ENCODE measurements at regions of chr2 and their contacts with region 1.

Region 1: DNA sequence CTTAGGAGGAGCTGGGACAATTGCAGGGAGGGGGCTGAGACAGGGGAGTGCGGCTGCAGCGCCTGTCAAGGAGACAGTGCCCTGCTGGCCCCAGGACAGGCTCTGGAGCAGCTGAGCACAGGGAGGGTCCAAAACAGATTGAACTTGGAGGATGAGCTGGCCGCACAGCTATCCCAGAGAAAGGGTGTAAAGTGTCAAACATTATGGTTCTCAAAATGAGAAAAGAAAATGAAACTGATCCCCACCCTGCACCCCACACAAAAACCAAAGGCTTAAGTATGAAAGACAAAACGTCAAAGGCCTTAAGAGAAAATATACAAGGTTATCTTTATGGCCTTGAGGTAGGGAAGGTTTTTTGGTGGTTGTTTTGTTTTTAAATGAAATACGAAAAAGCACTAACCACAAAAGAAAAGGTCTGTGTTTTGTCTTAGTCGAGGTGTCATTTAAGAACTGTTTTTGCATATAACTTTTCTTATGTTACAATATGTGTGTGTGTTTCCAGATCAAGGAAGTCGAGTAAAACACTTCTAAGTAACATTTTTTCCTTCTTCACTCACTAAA is 111.8 kb downstream of the HDAC4 start:
- DNase-seq: peak; percentile 68
- H3K4me3 Mint-ChIP-seq: peak overlapping the region; percentile 45
- H3K27ac Mint-ChIP-seq: peak overlapping the region; percentile 86
- H3K4me1 Mint-ChIP-seq: peaks cover 76% of the 10 kb centered on the region
- H3K27me3 Mint-ChIP-seq: peaks cover 13% of the 10 kb centered on the region

Region 2: DNA sequence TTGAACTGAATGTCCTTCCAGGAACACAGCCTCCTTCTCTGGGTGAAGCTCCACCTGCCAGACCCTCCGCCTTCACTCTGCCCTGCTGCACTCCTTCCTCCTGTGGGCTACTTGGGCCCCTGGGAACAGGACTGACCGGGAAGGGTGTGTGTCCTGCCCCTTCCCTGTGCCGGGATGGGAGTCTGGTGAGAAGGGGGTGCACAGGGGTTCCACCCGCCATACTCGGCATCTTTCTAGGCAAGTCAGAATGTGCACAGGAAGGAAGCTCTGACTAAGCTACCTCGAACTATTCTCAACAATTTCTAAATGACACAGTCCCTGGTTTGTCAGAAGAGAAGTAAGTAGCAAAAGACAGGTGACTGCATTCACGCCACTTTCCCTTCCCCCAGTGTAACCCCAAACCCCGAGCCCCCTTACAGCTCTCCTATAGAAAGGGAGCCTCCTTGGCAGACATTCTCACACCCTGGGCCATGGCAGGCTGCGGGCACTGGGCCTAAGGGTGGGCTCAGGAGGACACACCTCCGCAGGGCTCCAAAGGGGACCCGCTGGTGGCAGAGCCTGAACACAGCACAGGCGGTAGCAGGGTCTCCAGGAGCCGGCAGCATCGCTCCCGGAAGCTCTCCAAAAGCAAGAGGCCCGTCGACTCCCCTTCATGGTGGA is 72.3 kb before region 1 on chr2:
- CTCF ChIA-PET with region 1: no interaction called
- intact Hi-C with region 1: loop called (anchors 1 kb)
- DNase-seq: peak; percentile 72
- H3K4me3 Mint-ChIP-seq: peak overlapping the region; percentile 69
- H3K27ac Mint-ChIP-seq: peak overlapping the region; percentile 87
- H3K4me1 Mint-ChIP-seq: peaks cover 71% of the 10 kb centered on the region
- H3K27me3 Mint-ChIP-seq: no peaks in the 10 kb centered on the region

Region 3: DNA sequence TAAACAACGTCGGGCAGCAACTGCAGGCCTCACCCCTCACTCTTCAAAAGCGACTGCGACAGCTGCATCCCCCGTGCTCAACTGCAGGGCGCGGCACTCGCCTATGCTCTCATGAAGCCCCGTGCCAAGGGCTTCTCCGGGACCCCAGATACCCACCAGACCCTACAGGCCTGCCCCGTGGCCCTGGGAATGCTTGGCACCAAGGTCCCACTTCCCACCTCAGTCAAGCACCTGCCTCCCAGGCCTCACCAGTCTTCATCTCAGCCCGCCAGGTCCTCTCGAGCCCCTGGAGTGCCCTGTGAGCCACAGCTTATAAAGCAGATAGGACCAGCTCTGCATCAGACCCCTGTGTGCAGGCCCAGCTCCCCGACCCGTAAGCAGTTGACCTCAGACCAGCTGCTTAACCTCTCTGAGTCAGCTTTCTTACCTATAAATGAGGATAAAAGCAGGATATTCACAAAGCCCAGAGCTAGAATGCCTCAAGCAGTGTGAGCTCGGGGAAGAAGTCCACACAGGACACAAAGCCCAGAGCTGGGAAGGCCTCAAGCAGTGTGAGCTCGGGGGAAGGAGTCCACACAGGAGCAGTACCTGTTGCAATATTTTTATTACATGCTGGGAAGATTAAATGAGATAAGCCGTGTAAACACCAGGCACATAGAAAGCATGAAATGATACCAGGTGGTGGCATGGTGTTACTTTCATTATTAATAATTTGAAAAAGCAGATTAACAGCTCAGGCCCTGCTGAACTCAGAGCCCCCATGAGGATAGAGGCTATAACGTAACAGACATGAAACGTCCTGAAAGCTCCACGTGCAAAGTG is 14.9 kb after region 1 on chr2:
- CTCF ChIA-PET with region 1: interaction called, 3 read pairs
- intact Hi-C with region 1: loop called (anchors 1 kb)
- DNase-seq: peak; percentile 50
- H3K4me3 Mint-ChIP-seq: no peak overlapping the region
- H3K27ac Mint-ChIP-seq: no peak overlapping the region
- H3K4me1 Mint-ChIP-seq: peaks cover 40% of the 10 kb centered on the region
- H3K27me3 Mint-ChIP-seq: no peaks in the 10 kb centered on the region

Region 4: GRCh38 chr2:239326831-239327535 is 38.0 kb after region 1 on chr2:
- CTCF ChIA-PET with region 1: interaction called, 5 read pairs
- intact Hi-C with region 1: loop called (anchors 1 kb)
- DNase-seq: peak; percentile 94
- H3K4me3 Mint-ChIP-seq: peak overlapping the region; percentile 24
- H3K27ac Mint-ChIP-seq: peak overlapping the region; percentile 81
- H3K4me1 Mint-ChIP-seq: peaks cover 79% of the 10 kb centered on the region
- H3K27me3 Mint-ChIP-seq: no peaks in the 10 kb centered on the region

Region 5: DNA sequence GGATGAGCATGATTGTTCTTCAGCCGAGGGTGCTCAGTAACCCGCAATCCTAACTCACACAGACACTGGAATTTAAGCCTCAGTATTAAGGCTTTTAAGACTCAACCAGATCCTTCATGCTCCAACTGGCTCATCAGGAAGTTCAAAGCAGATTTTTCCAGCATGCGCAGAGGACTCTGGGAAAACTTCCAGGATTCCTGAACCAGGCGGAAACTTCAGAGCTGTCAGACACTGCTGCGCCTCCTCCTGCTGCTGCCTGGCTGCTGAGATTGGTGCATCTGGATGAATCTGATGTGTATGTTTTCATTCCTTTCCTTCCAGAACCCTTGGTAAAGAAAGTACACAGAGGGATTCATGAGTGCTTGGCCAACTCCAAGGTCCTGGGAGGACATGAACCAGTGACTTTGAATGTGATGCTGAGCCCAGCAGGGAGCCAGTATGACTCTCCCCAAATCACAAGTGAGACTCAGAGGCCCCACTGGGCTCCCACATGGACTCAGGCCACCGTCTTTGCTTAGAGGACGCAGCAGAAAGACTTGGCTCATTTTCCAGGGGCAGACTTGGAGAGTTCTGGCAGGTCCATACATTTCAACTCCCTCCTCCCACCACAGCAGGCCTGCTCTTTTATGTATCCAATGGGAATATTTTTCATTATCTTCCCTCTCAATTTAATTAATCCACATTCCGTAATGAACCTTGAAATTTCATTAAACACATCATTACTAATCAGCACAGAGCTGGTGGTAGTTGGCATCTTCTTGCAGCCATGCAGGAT is 255.3 kb after region 1 on chr2:
- CTCF ChIA-PET with region 1: no interaction called
- intact Hi-C with region 1: loop called (anchors 2 kb)
- DNase-seq: no peak
- H3K4me3 Mint-ChIP-seq: no peak overlapping the region
- H3K27ac Mint-ChIP-seq: no peak overlapping the region
- H3K4me1 Mint-ChIP-seq: peaks cover 35% of the 10 kb centered on the region
- H3K27me3 Mint-ChIP-seq: peaks cover 11% of the 10 kb centered on the region

Measured in activated naive CD4-positive, alpha-beta T cell treated with anti-CD3 and anti-CD28 coated beads for 36 hours (primary cell).